Pancreas (tissue), 10 donors: ENCODE measurements at regions of chr17 and their contacts with region 1.

Region 1: DNA sequence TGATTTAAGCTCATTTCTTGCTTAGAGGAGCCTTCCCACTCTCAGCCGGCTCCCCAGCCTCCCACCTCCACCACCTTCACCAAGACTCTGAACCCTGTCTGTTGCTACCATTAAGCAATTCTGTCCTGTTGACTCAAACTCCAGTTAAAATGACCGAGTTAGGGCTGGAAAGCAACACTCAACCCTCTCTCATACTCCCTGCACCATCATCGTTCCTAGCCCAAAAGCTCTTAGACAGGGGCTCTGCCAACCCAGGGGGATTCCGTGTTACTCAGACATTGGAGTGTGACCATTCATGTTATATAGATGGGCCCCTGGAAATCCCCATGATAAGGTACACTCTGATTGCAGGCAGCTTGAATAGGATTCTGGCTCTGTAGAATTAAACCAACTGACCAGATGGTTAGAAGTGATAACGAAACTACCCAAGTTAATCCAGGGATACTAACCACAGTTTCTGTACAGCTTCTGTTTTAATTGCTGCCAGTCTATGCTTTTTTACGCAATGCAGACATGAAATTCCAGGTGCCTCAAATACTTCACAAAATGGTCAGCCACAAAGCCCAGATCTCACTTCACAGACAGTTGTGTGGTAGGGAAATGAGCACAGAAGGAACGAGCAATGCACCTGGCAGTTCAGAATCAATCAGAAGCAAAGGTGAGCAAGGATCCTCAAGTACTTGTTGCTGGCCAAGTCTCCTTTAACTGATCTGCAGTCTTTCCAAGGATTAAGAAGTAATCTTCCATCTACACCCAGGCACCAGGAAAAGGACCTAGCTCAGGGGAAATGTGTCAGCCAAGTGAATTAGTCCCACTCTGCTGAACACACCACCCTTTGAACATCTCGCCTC is 2.1 kb downstream of the SSTR2 start:
- DNase-seq: no peak
- ATAC-seq: peak in 1 of 4 donors; percentile 2
- H3K4me3 ChIP-seq: peak overlapping the region in 1 of 4 donors; percentile 53
- H3K27ac ChIP-seq: no peak overlapping the region
- H3K4me1 ChIP-seq: peaks cover 0 to 4% (median 0%) of the 10 kb centered on the region in 3 donors
- H3K27me3 ChIP-seq: peaks cover 0 to 13% (median 1%) of the 10 kb centered on the region in 4 donors
- CTCF ChIP-seq: no peak

Region 2: DNA sequence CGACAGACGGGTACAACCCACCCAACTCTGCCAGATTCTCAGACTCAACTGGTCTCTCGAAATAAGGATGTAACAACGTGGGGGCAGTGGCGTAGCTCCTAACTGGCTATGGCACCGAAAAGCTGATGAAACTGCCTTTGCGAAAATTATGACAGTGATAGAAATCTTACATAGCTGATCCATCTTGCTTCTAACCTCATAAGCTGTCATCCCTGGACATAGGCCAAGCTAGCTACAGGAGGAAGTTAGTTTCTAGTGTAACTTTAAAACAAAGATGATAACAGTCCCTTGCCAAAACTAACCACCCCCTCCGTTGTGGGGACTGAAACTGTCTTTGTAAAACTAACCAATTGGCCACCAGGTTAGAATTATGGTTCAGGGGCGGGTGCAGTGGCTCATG is 294.6 kb before region 1 on chr17:
- intact Hi-C with region 1: no loop called
- DNase-seq: no peak
- ATAC-seq: no peak
- H3K4me3 ChIP-seq: no peak overlapping the region
- H3K27ac ChIP-seq: no peak overlapping the region
- H3K4me1 ChIP-seq: no peaks in the 10 kb centered on the region
- H3K27me3 ChIP-seq: no peaks in the 10 kb centered on the region
- CTCF ChIP-seq: no peak

Region 3: DNA sequence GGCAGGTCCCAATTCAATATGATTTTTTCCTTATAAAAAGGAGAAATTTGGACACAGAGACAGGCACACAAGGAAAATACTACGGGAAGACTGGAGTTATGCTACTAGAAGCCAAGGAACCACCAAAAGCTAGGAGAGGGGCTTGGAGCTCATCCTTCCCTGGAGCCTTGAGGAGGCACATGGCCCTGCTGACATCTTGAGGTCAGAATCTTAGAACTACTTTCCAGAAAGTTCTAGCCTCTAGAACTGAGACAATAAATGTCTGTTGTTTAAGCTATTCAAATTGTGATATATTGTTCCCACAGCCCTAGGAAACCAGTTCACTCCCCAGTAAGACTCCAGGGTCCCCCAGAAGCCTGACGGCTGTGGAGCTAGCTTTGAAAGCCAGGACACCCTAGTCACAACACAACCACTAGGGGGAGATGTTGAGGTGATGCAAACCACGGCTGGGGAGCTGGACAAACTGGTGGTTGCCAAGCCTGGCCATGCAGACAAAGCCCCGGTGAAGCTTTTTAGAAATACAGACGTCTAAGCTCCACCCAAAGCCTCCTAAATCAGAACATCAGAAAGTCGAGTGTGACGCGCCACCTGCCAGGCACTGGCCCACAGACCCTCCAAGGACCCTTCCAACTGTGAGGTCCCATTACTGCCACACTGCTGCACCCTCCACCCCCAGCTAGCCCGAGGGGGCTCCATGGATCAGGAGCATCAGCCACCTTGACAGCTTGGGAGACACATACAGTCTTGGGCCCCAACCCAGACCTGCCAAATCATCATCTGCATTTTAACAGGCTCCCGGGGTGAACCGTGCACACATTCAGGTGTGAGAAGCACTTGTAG is 180.9 kb before region 1 on chr17:
- intact Hi-C with region 1: loop called in 1 of 3 experiments (anchors 10 kb)
- DNase-seq: peak in 5 of 6 donors; percentile 62 to 76 (median 70)
- ATAC-seq: peak; percentile 89 to 98 (median 94)
- H3K4me3 ChIP-seq: no peak overlapping the region
- H3K27ac ChIP-seq: no peak overlapping the region
- H3K4me1 ChIP-seq: no peaks in the 10 kb centered on the region
- H3K27me3 ChIP-seq: no peaks in the 10 kb centered on the region
- CTCF ChIP-seq: peak; percentile 73 to 90 (median 82)

Region 4: DNA sequence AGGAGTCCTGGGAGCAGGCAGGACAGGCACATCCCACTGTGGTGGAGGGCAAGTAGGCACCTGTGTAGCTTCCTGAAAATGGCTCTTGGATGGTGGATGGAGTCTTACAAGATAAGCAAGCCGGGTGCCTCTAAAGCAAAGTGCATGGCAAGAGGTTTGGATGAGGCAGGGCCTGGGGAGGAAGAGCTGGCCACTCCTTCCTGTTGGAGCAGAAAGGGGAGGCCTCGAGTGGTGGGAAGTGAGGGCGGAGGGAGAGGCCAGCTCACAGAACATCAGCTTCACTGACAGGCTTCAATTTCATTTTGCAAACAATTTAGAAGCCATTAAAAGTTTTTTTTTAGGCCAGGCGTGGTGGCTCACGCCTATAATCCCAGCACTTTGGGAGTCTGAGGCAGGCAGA is 1330.5 kb after region 1 on chr17:
- intact Hi-C with region 1: no loop called
- DNase-seq: no peak
- ATAC-seq: no peak
- H3K4me3 ChIP-seq: no peak overlapping the region
- H3K27ac ChIP-seq: no peak overlapping the region
- H3K4me1 ChIP-seq: no peaks in the 10 kb centered on the region
- H3K27me3 ChIP-seq: no peaks in the 10 kb centered on the region
- CTCF ChIP-seq: no peak